PC-3 (cell line): ENCODE measurements at regions of chr3 and their contacts with region 1.

Region 1: DNA sequence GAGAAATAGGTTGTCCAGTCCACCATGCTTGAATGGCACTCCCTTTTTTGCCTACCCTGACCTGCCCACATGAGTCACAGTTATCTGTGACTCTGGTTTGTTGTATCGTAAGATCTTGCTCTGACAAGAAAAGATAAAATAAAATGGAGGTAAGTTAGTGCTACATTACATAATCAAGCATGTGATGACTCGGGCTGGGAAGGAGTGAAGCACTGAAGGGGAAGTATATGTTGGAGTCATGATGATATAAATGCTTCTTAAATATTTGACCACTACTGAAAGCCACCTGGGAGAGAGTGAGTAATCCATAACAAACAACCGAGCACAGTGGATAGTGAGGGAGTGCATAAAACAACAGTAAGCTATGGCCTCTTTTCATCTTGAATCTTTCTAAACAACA is 124.4 kb downstream of the SHOX2 start:
- DNase-seq: peak; percentile 90
- ATAC-seq: peak; percentile 92
- H3K4me3 ChIP-seq: peak overlapping the region; percentile 11; the same call in 1 of the 2 replicates
- H3K27ac ChIP-seq: peak overlapping the region; percentile 92
- H3K4me1 ChIP-seq: peaks cover 34% of the 10 kb centered on the region
- H3K27me3 ChIP-seq: no peaks in the 10 kb centered on the region
- CTCF ChIP-seq: no peak

Region 2: GRCh38 chr3:157650172-157650571 is 331.6 kb before region 1 on chr3:
- CTCF ChIA-PET with region 1: no interaction called
- POLR2A ChIA-PET with region 1: no interaction called
- intact Hi-C with region 1: no loop called
- DNase-seq: no peak
- ATAC-seq: no peak
- H3K4me3 ChIP-seq: no peak overlapping the region
- H3K27ac ChIP-seq: no peak overlapping the region
- H3K4me1 ChIP-seq: no peaks in the 10 kb centered on the region
- H3K27me3 ChIP-seq: no peaks in the 10 kb centered on the region
- CTCF ChIP-seq: no peak

Region 3: GRCh38 chr3:157913741-157914150 is 68.1 kb before region 1 on chr3:
- CTCF ChIA-PET with region 1: interaction called, 3 read pairs
- POLR2A ChIA-PET with region 1: no interaction called
- intact Hi-C with region 1: loop called (anchors 1 kb)
- DNase-seq: peak; percentile 34
- ATAC-seq: peak; percentile 30
- H3K4me3 ChIP-seq: no peak overlapping the region
- H3K27ac ChIP-seq: peak overlapping the region; percentile 16; the same call in 1 of the 2 replicates
- H3K4me1 ChIP-seq: peaks cover 46% of the 10 kb centered on the region
- H3K27me3 ChIP-seq: no peaks in the 10 kb centered on the region
- CTCF ChIP-seq: no peak

Region 4: DNA sequence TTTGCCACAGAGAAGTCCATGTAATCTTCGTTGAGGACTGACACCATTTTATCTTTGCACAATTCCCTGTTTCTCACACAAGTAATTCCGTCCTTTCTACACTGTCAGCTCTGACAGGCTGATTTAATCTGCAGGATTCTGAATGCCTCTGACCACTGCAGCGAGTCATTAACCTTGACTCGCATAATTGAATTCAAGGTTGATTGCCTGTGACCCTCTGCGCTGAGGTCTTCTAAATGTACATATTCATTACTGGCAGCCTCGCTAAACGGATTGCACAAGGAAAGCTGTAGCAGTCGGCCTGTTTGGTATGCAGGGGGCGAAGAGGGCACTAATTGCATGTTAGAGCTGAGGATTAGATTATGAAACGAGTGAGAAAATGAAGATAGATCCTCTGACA is 23.4 kb before region 1 on chr3:
- CTCF ChIA-PET with region 1: no interaction called
- POLR2A ChIA-PET with region 1: no interaction called
- intact Hi-C with region 1: no loop called
- DNase-seq: no peak
- ATAC-seq: no peak
- H3K4me3 ChIP-seq: no peak overlapping the region
- H3K27ac ChIP-seq: no peak overlapping the region
- H3K4me1 ChIP-seq: no peaks in the 10 kb centered on the region
- H3K27me3 ChIP-seq: no peaks in the 10 kb centered on the region
- CTCF ChIP-seq: no peak

Region 5: DNA sequence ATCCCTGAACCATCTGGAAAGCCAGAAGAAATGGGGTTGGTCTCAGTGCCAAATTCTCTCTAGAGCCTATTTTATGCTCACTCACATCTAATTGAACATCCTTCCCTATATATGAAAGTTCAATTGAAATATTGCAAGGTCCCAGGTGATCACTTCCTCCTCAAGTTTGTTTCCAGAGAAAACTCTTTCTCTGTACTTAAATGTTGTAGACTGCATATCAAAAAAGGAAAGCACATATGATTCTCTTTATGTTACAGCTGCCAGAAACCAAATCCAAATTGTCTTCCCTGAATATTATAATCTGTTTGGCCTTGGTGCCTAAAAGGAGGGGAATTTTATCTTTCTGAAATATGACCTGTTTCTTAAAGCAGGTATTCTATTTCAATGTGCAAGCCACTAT is 31.1 kb after region 1 on chr3:
- CTCF ChIA-PET with region 1: no interaction called
- POLR2A ChIA-PET with region 1: no interaction called
- intact Hi-C with region 1: no loop called
- DNase-seq: no peak
- ATAC-seq: no peak
- H3K4me3 ChIP-seq: no peak overlapping the region
- H3K27ac ChIP-seq: no peak overlapping the region
- H3K4me1 ChIP-seq: no peaks in the 10 kb centered on the region
- H3K27me3 ChIP-seq: no peaks in the 10 kb centered on the region
- CTCF ChIP-seq: no peak

Region 6: GRCh38 chr3:158058495-158059130 is 76.8 kb after region 1 on chr3:
- CTCF ChIA-PET with region 1: interaction called, 3 read pairs
- POLR2A ChIA-PET with region 1: no interaction called
- intact Hi-C with region 1: loop called (anchors 2 kb)
- DNase-seq: no peak
- ATAC-seq: no peak
- H3K4me3 ChIP-seq: no peak overlapping the region
- H3K27ac ChIP-seq: no peak overlapping the region
- H3K4me1 ChIP-seq: peaks cover 19% of the 10 kb centered on the region
- H3K27me3 ChIP-seq: no peaks in the 10 kb centered on the region
- CTCF ChIP-seq: no peak

Region 7: GRCh38 chr3:158160966-158161365 is 179.1 kb after region 1 on chr3:
- CTCF ChIA-PET with region 1: no interaction called
- POLR2A ChIA-PET with region 1: no interaction called
- intact Hi-C with region 1: loop called (anchors 2 kb)
- DNase-seq: peak; percentile 91
- ATAC-seq: peak; percentile 90
- H3K4me3 ChIP-seq: no peak overlapping the region
- H3K27ac ChIP-seq: peak overlapping the region; percentile 89
- H3K4me1 ChIP-seq: peaks cover 31% of the 10 kb centered on the region
- H3K27me3 ChIP-seq: no peaks in the 10 kb centered on the region
- CTCF ChIP-seq: no peak

Region 8: DNA sequence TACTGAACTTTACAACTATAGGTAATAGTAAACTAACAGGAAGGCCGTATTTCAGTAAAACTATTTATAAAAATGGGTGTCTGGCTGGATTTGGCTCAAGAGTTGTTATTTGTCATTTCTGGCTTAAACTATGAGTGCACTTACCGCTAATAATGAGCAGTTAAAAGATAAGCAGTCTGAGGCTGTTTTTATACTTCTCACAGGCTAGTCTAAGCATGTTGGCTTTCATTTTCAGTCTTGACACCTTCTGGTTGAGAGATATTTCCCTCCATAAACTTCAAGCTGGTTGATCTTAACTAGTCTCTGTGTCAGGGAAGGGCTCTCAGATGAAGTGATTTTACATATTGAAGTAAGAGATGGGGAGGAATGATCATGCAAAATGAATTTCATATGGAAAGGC is 224.2 kb after region 1 on chr3:
- CTCF ChIA-PET with region 1: no interaction called
- POLR2A ChIA-PET with region 1: no interaction called
- intact Hi-C with region 1: no loop called
- DNase-seq: no peak
- ATAC-seq: no peak
- H3K4me3 ChIP-seq: no peak overlapping the region
- H3K27ac ChIP-seq: no peak overlapping the region
- H3K4me1 ChIP-seq: no peaks in the 10 kb centered on the region
- H3K27me3 ChIP-seq: no peaks in the 10 kb centered on the region
- CTCF ChIP-seq: no peak